ENCODE measurements at regions of chr2 and their contacts with region 1.

Region 1: GRCh38 chr2:46296840-46297545 is at the start of gene EPAS1:
- DNase-seq: peak; percentile 93
- H3K4me3 ChIP-seq: peak within 1 kb of the TSS; percentile 64 to 86 (median 66)
- H3K27ac ChIP-seq: peak within 1 kb of the TSS; percentile 81
- H3K4me1 ChIP-seq: peaks cover 23% of the 10 kb centered on the region
- H3K27me3 ChIP-seq: no peaks in the 10 kb centered on the region
- CTCF ChIP-seq: no peak
- POLR2A ChIP-seq: peak; percentile 97
- total RNA-seq, gene EPAS1: 374 and 397 TPM in 2 replicates

Region 2: DNA sequence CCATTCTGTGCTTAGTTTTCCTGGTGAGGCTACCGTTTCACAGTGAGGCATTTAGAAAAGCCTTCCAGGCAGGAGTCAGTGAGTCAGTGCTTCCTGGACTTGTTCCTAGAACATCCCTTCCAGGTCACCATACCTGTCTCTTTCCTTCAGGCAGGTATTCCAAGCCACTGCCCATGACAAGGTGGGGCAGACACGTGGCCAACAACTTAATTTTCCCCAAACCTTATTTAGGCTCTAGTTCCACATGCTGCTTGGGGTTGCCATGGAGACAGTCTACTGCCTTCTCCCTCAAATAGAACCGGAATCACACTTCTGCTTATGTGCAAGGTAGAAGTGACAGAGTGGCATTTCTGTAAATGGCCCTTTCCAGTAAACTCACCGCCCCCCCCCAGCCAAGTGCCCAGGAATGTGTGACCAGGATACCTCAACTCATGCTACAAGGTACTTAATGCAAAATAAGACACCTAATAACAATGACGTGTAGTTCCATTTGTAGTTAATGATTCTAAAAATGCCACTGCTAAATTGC is 387.3 kb before region 1 on chr2:
- CTCF ChIA-PET with region 1: no interaction called
- POLR2A ChIA-PET with region 1: no interaction called
- dilution Hi-C with region 1: no loop called
- intact Hi-C with region 1: no loop called
- DNase-seq: no peak
- H3K4me3 ChIP-seq: no peak overlapping the region
- H3K27ac ChIP-seq: no peak overlapping the region
- H3K4me1 ChIP-seq: no peaks in the 10 kb centered on the region
- H3K27me3 ChIP-seq: no peaks in the 10 kb centered on the region
- CTCF ChIP-seq: no peak
- POLR2A ChIP-seq: no peak

Region 3: DNA sequence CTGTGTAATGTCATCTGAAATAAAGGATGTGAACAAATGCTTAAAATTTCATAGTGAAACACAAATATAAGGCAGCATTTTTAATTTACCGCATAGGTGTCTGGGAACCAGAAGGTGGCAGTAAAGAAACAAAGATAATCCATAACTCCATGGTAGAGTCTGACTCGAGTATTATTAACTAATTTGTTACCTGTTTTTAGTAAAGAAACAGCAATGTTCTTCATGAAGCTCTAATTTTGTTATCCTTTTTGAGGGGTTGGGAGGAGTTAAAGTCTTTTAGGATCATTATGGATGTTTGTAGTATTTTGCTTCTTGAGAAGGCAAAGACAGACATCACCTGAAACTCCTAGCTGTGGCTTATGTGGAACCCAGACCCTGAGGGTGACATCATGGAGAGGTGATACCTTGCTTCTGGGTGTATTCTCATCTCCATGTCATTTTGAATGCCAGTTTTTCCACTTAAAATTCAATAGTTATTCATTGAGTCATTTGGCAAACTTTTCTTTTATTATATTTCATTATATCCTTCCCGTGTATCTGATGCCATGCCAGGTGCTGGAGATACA is 286.0 kb before region 1 on chr2:
- CTCF ChIA-PET with region 1: interaction called, 9 read pairs
- POLR2A ChIA-PET with region 1: interaction called, 4 read pairs
- dilution Hi-C with region 1: no loop called
- intact Hi-C with region 1: loop called (anchors 2 kb)
- DNase-seq: peak; percentile 72
- H3K4me3 ChIP-seq: no peak overlapping the region
- H3K27ac ChIP-seq: no peak overlapping the region
- H3K4me1 ChIP-seq: peaks cover 16% of the 10 kb centered on the region
- H3K27me3 ChIP-seq: no peaks in the 10 kb centered on the region
- CTCF ChIP-seq: peak; percentile 32 to 57
- POLR2A ChIP-seq: no peak

Region 4: DNA sequence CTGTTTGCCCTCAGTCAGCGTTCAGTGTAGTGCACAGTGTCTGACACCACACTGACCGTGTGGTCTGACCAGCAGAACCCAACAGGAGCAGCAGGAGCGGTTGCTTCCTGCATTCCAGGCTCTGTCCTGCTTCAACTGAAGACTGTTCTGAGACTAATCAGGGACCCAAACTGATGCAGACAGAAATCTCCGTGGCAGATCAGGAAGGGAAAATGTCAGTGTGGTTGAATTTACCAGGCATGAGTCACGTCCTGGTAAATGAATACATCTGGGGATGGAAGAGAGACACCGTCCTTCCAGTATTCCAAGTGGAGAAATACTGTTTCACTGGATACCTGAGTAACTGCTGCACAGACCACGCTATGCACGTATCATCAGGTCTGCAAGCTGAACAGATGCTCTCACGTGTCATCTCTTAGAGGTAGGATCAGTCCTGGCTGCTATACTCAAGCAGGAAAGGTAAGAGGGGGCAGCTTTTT is 223.4 kb before region 1 on chr2:
- CTCF ChIA-PET with region 1: interaction called, 4 read pairs
- POLR2A ChIA-PET with region 1: interaction called, 11 read pairs
- dilution Hi-C with region 1: no loop called
- intact Hi-C with region 1: loop called (anchors 1 kb)
- DNase-seq: peak; percentile 97
- H3K4me3 ChIP-seq: peak overlapping the region; percentile 13 to 88 (median 27)
- H3K27ac ChIP-seq: peak overlapping the region; percentile 84
- H3K4me1 ChIP-seq: peaks cover 71% of the 10 kb centered on the region
- H3K27me3 ChIP-seq: no peaks in the 10 kb centered on the region
- CTCF ChIP-seq: no peak
- POLR2A ChIP-seq: peak; percentile 65

Region 5: GRCh38 chr2:46200220-46200621 is 96.8 kb before region 1 on chr2:
- CTCF ChIA-PET with region 1: interaction called, 4 read pairs
- POLR2A ChIA-PET with region 1: interaction called, 5 read pairs
- dilution Hi-C with region 1: no loop called
- intact Hi-C with region 1: loop called (anchors 1 kb)
- DNase-seq: peak; percentile 86
- H3K4me3 ChIP-seq: no peak overlapping the region
- H3K27ac ChIP-seq: peak overlapping the region; percentile 22
- H3K4me1 ChIP-seq: peaks cover 34% of the 10 kb centered on the region
- H3K27me3 ChIP-seq: no peaks in the 10 kb centered on the region
- CTCF ChIP-seq: no peak
- POLR2A ChIP-seq: no peak

Region 6: GRCh38 chr2:46275973-46276372 is 21.0 kb before region 1 on chr2:
- CTCF ChIA-PET with region 1: interaction called, 11 read pairs
- POLR2A ChIA-PET with region 1: interaction called, 15 read pairs
- dilution Hi-C with region 1: no loop called
- intact Hi-C with region 1: loop called (anchors 1 kb)
- DNase-seq: peak; percentile 89
- H3K4me3 ChIP-seq: no peak overlapping the region
- H3K27ac ChIP-seq: peak overlapping the region; percentile 96
- H3K4me1 ChIP-seq: peaks cover 74% of the 10 kb centered on the region
- H3K27me3 ChIP-seq: no peaks in the 10 kb centered on the region
- CTCF ChIP-seq: no peak
- POLR2A ChIP-seq: no peak

Region 7: DNA sequence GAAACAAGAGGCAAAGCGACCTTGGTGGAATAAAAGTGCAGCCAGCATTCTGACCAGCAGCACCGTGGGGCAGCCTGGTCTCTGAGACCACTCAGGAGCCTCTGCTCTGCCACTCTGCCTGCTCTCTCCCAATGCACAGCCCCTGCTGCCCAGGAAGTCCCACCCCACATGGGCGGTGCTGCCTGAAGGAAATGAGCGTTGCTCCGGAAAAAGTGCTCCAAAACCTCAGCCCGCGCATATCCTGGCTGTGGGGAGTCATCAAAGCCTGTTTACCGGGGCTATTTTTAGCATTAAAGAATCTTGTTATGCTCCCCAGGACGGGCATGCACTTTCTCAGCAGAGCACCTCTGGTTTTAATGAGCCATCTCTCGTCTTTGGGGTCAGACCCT is 54.8 kb after region 1 on chr2:
- CTCF ChIA-PET with region 1: interaction called, 5 read pairs
- POLR2A ChIA-PET with region 1: interaction called, 5 read pairs
- dilution Hi-C with region 1: no loop called
- intact Hi-C with region 1: loop called (anchors 1 kb)
- DNase-seq: peak; percentile 95
- H3K4me3 ChIP-seq: peak overlapping the region in 1 of 3 experiments; percentile 10
- H3K27ac ChIP-seq: peak overlapping the region; percentile 61
- H3K4me1 ChIP-seq: peaks cover 50% of the 10 kb centered on the region
- H3K27me3 ChIP-seq: no peaks in the 10 kb centered on the region
- CTCF ChIP-seq: no peak
- POLR2A ChIP-seq: peak; percentile 51

Region 8: DNA sequence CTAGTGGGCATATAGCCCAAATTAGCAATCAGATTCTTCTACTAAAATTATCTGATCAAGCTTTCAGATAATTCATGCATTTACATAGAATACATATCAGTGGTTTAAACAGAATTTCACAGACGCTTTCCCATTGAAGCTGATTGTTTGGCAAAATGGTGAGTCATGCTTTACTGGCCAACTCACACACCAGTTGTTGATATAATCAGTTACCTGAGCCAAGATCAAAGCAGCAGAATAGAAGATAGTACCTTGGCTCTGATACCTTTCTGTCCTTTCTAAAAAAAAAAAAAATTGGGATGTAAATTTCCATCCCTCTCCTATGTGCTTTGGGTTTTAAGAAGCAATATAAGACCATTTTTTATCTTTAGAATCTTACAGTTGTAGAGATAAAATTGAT is 440.6 kb after region 1 on chr2:
- CTCF ChIA-PET with region 1: no interaction called
- POLR2A ChIA-PET with region 1: no interaction called
- dilution Hi-C with region 1: no loop called
- intact Hi-C with region 1: no loop called
- DNase-seq: peak; percentile 27
- H3K4me3 ChIP-seq: no peak overlapping the region
- H3K27ac ChIP-seq: no peak overlapping the region
- H3K4me1 ChIP-seq: peaks cover 10% of the 10 kb centered on the region
- H3K27me3 ChIP-seq: no peaks in the 10 kb centered on the region
- CTCF ChIP-seq: no peak
- POLR2A ChIP-seq: no peak

Region 9: GRCh38 chr2:46836295-46837111 is 539.5 kb after region 1 on chr2:
- CTCF ChIA-PET with region 1: no interaction called
- POLR2A ChIA-PET with region 1: no interaction called
- dilution Hi-C with region 1: no loop called
- intact Hi-C with region 1: no loop called
- DNase-seq: no peak
- H3K4me3 ChIP-seq: no peak overlapping the region
- H3K27ac ChIP-seq: no peak overlapping the region
- H3K4me1 ChIP-seq: no peaks in the 10 kb centered on the region
- H3K27me3 ChIP-seq: no peaks in the 10 kb centered on the region
- CTCF ChIP-seq: no peak
- POLR2A ChIP-seq: no peak